ENCODE measurements at regions of chr3 and their contacts with region 1.

Region 1: DNA sequence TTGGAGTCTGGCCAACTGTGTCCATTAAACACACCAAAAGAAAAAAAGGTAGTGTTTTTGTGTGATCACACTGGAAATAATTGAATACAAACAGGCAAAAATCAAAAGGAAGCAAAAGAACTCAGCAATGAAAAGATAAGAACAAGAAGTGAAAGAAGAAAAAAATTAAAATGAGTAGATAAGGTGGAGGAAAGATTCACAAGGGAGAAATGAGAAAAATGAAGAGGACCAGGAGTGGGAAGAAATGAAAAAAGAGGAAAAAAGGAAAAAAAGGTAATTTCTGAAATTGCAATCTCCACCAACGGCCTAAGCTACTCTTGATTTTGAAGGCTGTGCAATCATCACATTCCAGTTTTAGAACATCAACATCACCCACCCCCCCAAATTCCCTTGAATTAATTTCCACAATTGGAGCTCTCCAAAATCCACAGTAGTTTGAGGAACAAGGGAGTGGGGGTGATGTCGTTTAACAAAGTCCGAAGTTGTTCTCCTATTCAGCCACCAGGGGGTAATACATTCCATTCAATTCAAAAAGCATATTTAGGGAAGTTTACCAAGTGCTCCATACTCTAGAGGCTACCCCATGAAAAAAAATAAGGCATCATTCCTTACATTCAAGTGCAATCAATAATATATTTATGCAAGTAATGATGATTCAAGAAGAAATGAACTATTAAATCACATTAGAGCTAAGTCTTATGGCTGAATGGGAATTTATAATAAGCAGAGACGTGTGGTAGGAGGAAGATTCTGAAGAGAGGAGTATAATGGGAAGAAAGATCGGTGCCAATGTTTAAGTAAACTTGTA is 37.4 kb downstream of the ZNF860 start:
- DNase-seq: peak; percentile 31
- H3K4me3 ChIP-seq: no peak overlapping the region
- H3K27ac ChIP-seq: no peak overlapping the region
- H3K4me1 ChIP-seq: no peaks in the 10 kb centered on the region
- H3K27me3 ChIP-seq: no peaks in the 10 kb centered on the region
- CTCF ChIP-seq: peak; percentile 68 to 70

Region 2: DNA sequence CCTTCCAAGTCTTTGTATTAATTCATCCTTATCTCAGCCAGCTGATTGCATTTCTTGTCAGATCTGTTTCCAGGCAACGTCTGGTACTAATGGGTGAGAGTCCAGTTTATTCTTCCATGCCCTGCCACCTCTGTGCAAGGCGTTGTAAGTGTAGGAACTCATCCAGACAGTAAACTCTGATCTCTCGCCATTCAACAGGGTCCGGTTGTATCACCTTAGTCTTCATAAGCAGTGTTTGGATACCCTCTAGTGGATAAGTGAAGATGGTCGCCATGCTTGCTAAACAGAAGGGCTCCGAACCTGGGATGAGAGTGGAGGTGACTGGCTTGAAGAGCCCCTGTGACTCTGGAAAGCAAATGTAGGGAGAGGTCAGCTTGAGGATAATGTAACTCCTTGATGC is 321.1 kb after region 1 on chr3:
- CTCF ChIA-PET with region 1: no interaction called
- dilution Hi-C with region 1: no loop called
- in situ Hi-C with region 1: loop called in 1 of 2 experiments (anchors 25 kb)
- intact Hi-C with region 1: loop called (anchors 2 kb)
- DNase-seq: peak; percentile 30
- H3K4me3 ChIP-seq: no peak overlapping the region
- H3K27ac ChIP-seq: no peak overlapping the region
- H3K4me1 ChIP-seq: no peaks in the 10 kb centered on the region
- H3K27me3 ChIP-seq: no peaks in the 10 kb centered on the region
- CTCF ChIP-seq: peak; percentile 54 to 63

Measured in mammary epithelial cell (primary cell).